Right lobe of liver (tissue), 6 donors: ENCODE measurements at regions of chr19 and their contacts with region 1.

Region 1: GRCh38 chr19:37893845-37894575 is 12.4 kb downstream of the WDR87 start:
- DNase-seq: no peak
- ATAC-seq: no peak
- H3K4me3 ChIP-seq: no peak overlapping the region
- H3K27ac ChIP-seq: no peak overlapping the region
- H3K4me1 ChIP-seq: no peaks in the 10 kb centered on the region
- H3K27me3 ChIP-seq: no peaks in the 10 kb centered on the region
- CTCF ChIP-seq: no peak
- POLR2A ChIP-seq: no peak

Region 2: GRCh38 chr19:37763488-37763887 is 130.5 kb before region 1 on chr19:
- intact Hi-C with region 1: no loop called
- DNase-seq: no peak
- ATAC-seq: no peak
- H3K4me3 ChIP-seq: no peak overlapping the region
- H3K27ac ChIP-seq: no peak overlapping the region
- H3K4me1 ChIP-seq: no peaks in the 10 kb centered on the region
- H3K27me3 ChIP-seq: no peaks in the 10 kb centered on the region
- CTCF ChIP-seq: no peak
- POLR2A ChIP-seq: no peak

Region 3: DNA sequence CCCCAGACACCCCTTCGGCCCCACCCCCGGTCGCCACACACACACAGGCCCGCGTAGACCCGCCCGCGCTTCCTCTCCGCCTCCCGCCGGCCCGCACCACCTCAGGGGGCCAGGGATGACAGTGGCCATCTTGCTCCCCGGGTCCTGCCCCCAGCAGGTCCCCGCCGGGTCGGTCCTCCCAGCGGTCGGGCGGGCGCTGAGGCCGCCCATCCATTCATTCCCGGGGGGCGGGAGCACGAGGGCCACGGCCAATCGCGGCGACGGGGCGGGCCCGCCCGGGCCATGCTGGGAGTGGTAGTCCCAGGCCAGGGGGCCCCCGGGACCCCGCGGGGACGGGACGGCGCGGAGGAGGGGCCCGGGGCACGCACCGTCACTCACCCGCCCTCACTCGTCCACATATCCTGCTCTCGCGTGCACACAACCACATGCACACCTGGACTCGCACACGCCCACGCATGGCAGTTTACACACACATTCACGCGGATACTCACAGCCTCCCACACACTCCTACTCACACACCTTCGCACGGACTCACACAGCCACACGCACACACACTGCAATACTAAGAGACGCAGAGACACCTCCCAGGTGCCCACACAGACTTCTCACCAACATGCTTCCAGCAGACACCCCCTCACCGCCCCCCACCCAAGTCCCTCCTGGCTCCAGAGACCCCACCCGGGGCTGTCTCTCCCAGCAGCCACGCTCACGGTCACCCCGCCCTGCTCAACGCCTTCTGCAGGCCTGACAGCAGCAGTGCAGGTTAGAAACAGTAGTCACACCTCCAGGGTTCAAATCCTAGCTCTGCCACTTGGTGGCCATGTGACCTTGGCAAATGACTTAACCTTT is 330.2 kb after region 1 on chr19 and contains the start of gene DPF1:
- intact Hi-C with region 1: loop called in 1 of 2 experiments (anchors 10 kb)
- DNase-seq: no peak
- ATAC-seq: peak; percentile 33 to 59 (median 40)
- H3K4me3 ChIP-seq: peak within 1 kb of the TSS in 2 of 3 donors; percentile 16 to 19
- H3K27ac ChIP-seq: no peak within 1 kb of the TSS
- H3K4me1 ChIP-seq: no peaks in the 10 kb centered on the region
- H3K27me3 ChIP-seq: peaks cover 3 to 28% of the 10 kb centered on the region in 2 donors
- CTCF ChIP-seq: no peak
- POLR2A ChIP-seq: no peak
- total RNA-seq, gene DPF1: not detected

Region 4: DNA sequence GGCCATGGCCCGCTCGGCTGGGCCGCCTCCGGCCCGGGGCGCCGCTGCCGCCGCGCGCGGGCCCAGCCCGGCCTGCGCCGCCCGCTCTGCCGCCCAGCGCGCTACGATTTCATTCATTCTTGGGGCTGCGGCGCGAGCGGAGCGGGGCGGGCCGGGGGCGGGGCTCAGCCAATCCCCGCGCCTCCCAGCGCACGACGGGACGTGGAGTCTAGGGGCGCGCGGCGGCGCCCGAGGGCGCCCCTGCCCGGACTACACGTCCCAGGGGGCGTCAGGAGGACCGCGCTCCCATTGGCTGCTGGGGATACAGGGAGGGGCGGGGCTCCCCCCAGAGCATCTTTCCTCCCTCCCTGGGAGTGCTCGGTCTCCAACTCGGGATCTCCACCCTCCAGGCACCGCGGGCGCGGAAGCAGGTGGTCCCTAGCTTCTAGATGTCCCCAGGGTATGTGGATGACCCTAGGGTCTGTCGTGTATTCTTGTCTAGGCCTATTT is 335.6 kb after region 1 on chr19:
- intact Hi-C with region 1: loop called (anchors 10 kb)
- DNase-seq: no peak
- ATAC-seq: peak; percentile 26 to 62 (median 60)
- H3K4me3 ChIP-seq: no peak overlapping the region
- H3K27ac ChIP-seq: no peak overlapping the region
- H3K4me1 ChIP-seq: no peaks in the 10 kb centered on the region
- H3K27me3 ChIP-seq: peaks cover 0 to 20% of the 10 kb centered on the region in 2 donors
- CTCF ChIP-seq: no peak
- POLR2A ChIP-seq: no peak